ENCODE measurements at regions of chr19 and their contacts with region 1.

Region 1: GRCh38 chr19:18021121-18021755 is 13.3 kb downstream of the ARRDC2 start:
- DNase-seq: no peak
- H3K4me3 ChIP-seq: peak overlapping the region; percentile 76
- H3K27ac ChIP-seq: peak overlapping the region; percentile 86
- H3K4me1 ChIP-seq: peaks cover 27% of the 10 kb centered on the region
- CTCF ChIP-seq: no peak

Region 2: GRCh38 chr19:18044825-18045304 is 23.6 kb after region 1 on chr19:
- CTCF ChIA-PET with region 1: interaction called, 3 read pairs
- POLR2A ChIA-PET with region 1: interaction called, 8 read pairs
- intact Hi-C with region 1: loop called (anchors 1 kb)
- DNase-seq: peak; percentile 96
- H3K4me3 ChIP-seq: peak overlapping the region; percentile 44
- H3K27ac ChIP-seq: peak overlapping the region; percentile 88
- H3K4me1 ChIP-seq: peaks cover 36% of the 10 kb centered on the region
- CTCF ChIP-seq: no peak; the same call in 1 of the 2 replicates

Region 3: GRCh38 chr19:18058208-18059030 is 37.2 kb after region 1 on chr19:
- CTCF ChIA-PET with region 1: no interaction called
- POLR2A ChIA-PET with region 1: interaction called, 6 read pairs
- intact Hi-C with region 1: loop called (anchors 1 kb)
- DNase-seq: peak; percentile 85
- H3K4me3 ChIP-seq: peak overlapping the region; percentile 9
- H3K27ac ChIP-seq: peak overlapping the region; percentile 54
- H3K4me1 ChIP-seq: peaks cover 23% of the 10 kb centered on the region
- CTCF ChIP-seq: peak; percentile 98

Region 4: DNA sequence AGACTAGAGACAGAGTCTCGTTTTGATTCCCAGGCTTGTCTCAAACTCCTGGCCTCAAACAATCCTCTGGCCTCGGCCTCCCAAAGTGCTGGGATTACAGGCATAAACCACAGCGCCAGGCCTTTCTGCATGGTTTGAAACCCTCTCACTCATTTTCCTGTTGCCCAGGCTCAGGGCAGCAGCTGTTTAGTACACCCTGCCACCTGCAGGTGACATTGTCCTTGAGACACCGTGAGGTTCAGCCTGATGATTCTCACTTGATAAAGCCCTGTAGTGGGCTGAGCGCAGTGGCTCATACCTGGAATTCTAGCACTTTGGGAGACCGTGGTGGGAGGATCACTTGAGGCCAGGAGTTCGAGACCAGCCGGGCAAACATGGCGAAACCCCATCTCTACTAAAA is 53.0 kb after region 1 on chr19:
- CTCF ChIA-PET with region 1: no interaction called
- POLR2A ChIA-PET with region 1: no interaction called
- intact Hi-C with region 1: no loop called
- DNase-seq: no peak
- H3K4me3 ChIP-seq: no peak overlapping the region
- H3K27ac ChIP-seq: no peak overlapping the region
- H3K4me1 ChIP-seq: no peaks in the 10 kb centered on the region
- CTCF ChIP-seq: peak; percentile 33

Measured in OCI-LY7 (cell line).